AG04450 (cell line): ENCODE measurements at regions of chr2 and their contacts with region 1.

Region 1: DNA sequence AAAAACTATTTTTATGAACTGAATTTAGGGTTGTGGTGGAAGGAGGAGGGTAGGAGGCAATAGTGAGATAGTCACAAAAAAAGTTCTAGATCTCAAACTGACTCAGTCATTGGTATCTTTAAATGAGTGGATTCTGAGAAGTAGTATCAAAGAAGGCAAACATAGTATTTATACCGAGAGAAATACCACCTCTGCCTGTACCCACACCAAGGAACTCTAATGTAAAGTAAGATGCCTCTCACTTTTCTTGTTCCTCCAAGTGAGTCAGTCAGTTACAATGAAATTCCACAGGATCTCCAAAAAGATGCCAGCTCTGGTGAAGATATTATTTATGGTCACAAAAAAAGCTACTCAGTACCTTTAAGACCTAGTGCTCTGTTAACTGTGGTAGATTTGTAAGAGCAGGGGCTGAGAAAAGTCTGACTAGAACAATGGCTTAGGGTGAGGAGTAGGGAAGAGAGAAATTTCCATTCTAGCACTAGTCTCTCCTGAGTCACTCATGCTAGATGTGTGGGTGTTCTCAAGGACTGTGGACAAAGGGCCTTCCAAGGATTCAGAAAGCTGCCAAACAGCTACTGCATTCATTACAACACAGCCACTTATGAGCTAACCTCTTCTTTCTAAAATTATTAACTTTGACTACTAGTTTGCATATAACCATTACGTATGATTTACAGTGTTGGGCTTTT is 36.3 kb downstream of the YWHAQ start:
- DNase-seq: peak; percentile 50
- H3K4me3 ChIP-seq: no peak overlapping the region
- H3K27ac ChIP-seq: peak overlapping the region; percentile 33
- H3K27me3 ChIP-seq: no peaks in the 10 kb centered on the region
- CTCF ChIP-seq: no peak

Region 2: DNA sequence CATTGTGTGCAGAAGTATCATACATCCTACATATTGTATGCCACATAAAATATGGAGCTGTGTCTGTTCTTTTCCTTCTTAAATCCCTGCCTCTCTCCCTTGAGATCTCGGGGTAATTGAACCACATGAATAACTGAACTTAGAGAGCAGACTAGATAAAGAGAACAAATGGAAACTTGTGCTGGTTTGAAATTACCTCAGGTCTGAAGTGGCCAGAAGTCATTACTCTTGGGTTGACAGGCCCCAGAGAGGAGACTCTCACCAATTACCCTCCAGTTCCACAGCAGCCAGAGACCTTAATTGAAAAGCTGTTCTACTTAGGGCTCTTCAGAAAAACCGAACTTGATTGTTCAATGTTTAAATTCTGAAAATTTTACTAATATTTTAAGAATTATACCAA is 33.9 kb before region 1 on chr2:
- CTCF ChIA-PET with region 1: interaction called, 5 read pairs
- POLR2A ChIA-PET with region 1: interaction called, 10 read pairs
- DNase-seq: no peak
- H3K4me3 ChIP-seq: no peak overlapping the region
- H3K27ac ChIP-seq: no peak overlapping the region
- H3K27me3 ChIP-seq: no peaks in the 10 kb centered on the region
- CTCF ChIP-seq: no peak

Region 3: GRCh38 chr2:9703085-9703641 is 108.7 kb after region 1 on chr2:
- CTCF ChIA-PET with region 1: no interaction called
- POLR2A ChIA-PET with region 1: no interaction called
- DNase-seq: peak; percentile 36
- H3K4me3 ChIP-seq: no peak overlapping the region
- H3K27ac ChIP-seq: peak overlapping the region; percentile 52
- H3K27me3 ChIP-seq: no peaks in the 10 kb centered on the region
- CTCF ChIP-seq: no peak